ENCODE measurements at regions of chr21 and their contacts with region 1.

Region 1: GRCh38 chr21:38355992-38356797 is 99.4 kb downstream of the KCNJ15 start:
- DNase-seq: peak; percentile 71 to 74 (median 73)
- H3K4me3 ChIP-seq: no peak overlapping the region
- H3K4me3 Mint-ChIP-seq: no peak overlapping the region
- H3K27ac ChIP-seq: no peak overlapping the region
- H3K27ac Mint-ChIP-seq: no peak overlapping the region
- H3K4me1 ChIP-seq: peaks cover 15% of the 10 kb centered on the region in 2 donors
- H3K4me1 Mint-ChIP-seq: peaks cover 21% of the 10 kb centered on the region
- H3K27me3 ChIP-seq: no peaks in the 10 kb centered on the region
- H3K27me3 Mint-ChIP-seq: peaks cover 4 to 10% (median 7%) of the 10 kb centered on the region in 3 donors
- CTCF ChIP-seq: peak; percentile 93

Region 2: GRCh38 chr21:37711836-37712568 is 644.2 kb before region 1 on chr21:
- intact Hi-C with region 1: loop called (anchors 5 to 10 kb)
- DNase-seq: peak; percentile 33 to 56 (median 54)
- H3K4me3 ChIP-seq: no peak overlapping the region
- H3K4me3 Mint-ChIP-seq: no peak overlapping the region
- H3K27ac ChIP-seq: no peak overlapping the region
- H3K27ac Mint-ChIP-seq: no peak overlapping the region
- H3K4me1 ChIP-seq: no peaks in the 10 kb centered on the region
- H3K4me1 Mint-ChIP-seq: no peaks in the 10 kb centered on the region
- H3K27me3 ChIP-seq: peaks cover 2 to 4% of the 10 kb centered on the region in 2 donors
- H3K27me3 Mint-ChIP-seq: peaks cover 6 to 21% (median 8%) of the 10 kb centered on the region in 3 donors
- CTCF ChIP-seq: peak; percentile 80

Region 3: GRCh38 chr21:38159355-38159754 is 196.8 kb before region 1 on chr21:
- intact Hi-C with region 1: loop called (anchors 5 kb)
- DNase-seq: peak; percentile 52 to 68 (median 52)
- H3K4me3 ChIP-seq: no peak overlapping the region
- H3K4me3 Mint-ChIP-seq: no peak overlapping the region
- H3K27ac ChIP-seq: no peak overlapping the region
- H3K27ac Mint-ChIP-seq: no peak overlapping the region
- H3K4me1 ChIP-seq: no peaks in the 10 kb centered on the region
- H3K4me1 Mint-ChIP-seq: peaks cover 5% of the 10 kb centered on the region
- H3K27me3 ChIP-seq: peaks cover 9 to 12% of the 10 kb centered on the region in 2 donors
- H3K27me3 Mint-ChIP-seq: peaks cover 4 to 28% (median 17%) of the 10 kb centered on the region in 3 donors
- CTCF ChIP-seq: peak; percentile 87

Region 4: GRCh38 chr21:38219049-38219628 is 137.1 kb before region 1 on chr21:
- intact Hi-C with region 1: loop called (anchors 1 to 2 kb)
- DNase-seq: peak; percentile 83 to 88 (median 87)
- H3K4me3 ChIP-seq: no peak overlapping the region
- H3K4me3 Mint-ChIP-seq: peak overlapping the region in 1 of 2 donors; percentile 27
- H3K27ac ChIP-seq: peak overlapping the region in 1 of 2 donors; percentile 92
- H3K27ac Mint-ChIP-seq: peak overlapping the region; percentile 87 to 95 (median 90)
- H3K4me1 ChIP-seq: peaks cover 25 to 34% of the 10 kb centered on the region in 2 donors
- H3K4me1 Mint-ChIP-seq: peaks cover 27% of the 10 kb centered on the region
- H3K27me3 ChIP-seq: no peaks in the 10 kb centered on the region
- H3K27me3 Mint-ChIP-seq: peaks cover 0 to 4% (median 3%) of the 10 kb centered on the region in 3 donors
- CTCF ChIP-seq: peak; percentile 97

Region 5: DNA sequence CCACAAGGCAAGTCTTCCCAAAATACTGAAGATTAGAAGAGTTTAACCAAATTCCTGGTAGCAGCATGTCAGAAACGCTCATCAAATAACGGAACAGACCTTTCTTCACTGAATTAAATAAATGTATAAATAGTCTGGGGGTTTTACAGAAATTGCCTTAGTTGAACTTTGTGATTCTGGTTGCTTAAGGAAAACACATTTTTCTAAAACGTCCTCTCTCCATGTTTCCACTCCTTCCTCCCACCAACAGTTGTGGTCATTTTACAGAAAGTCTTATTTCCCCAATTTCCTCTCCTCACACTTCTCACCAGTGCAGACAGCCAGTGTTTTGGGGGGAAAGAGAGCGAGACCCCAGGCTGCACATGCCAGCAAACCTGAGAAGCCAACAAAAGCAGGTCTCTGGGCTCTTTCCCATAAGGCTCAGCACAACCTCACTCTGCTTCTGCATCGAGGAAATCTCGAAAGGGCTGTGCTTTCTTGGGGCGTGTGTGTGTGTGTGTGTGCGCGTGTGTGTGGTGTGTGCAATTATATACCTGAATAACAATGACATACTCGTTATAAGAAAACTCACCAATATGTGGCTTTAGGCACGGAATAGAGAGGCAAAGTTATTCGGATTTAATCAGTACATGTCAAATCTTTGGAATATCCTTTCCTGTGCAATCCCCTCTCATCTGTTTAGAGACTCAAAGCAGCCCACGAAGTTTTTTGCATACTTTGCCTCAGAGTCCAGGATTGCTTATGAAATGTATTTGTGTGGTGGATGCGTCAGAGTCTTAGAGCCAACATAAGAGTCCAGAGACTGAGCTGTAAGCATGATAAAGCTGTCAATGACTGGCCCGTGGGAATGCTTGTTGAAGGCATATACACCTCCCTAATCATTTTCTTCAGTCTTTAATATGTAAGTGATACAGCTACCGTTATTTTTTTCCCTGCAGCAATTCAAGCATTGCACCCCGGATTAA is 97.4 kb before region 1 on chr21:
- intact Hi-C with region 1: no loop called
- DNase-seq: peak in 2 of 3 donors; percentile 55 to 62
- H3K4me3 ChIP-seq: peak overlapping the region in 1 of 3 experiments; percentile 43
- H3K4me3 Mint-ChIP-seq: peak overlapping the region; percentile 28 to 77
- H3K27ac ChIP-seq: peak overlapping the region in 1 of 2 donors; percentile 67
- H3K27ac Mint-ChIP-seq: peak overlapping the region; percentile 63 to 94 (median 90)
- H3K4me1 ChIP-seq: peaks cover 40 to 51% of the 10 kb centered on the region in 2 donors
- H3K4me1 Mint-ChIP-seq: peaks cover 61% of the 10 kb centered on the region
- H3K27me3 ChIP-seq: no peaks in the 10 kb centered on the region
- H3K27me3 Mint-ChIP-seq: peaks cover 0 to 1% (median 0%) of the 10 kb centered on the region in 3 donors
- CTCF ChIP-seq: no peak